Sciatic nerve (tissue), 2 donors: ENCODE measurements at regions of chr22 and their contacts with region 1.

Region 1: DNA sequence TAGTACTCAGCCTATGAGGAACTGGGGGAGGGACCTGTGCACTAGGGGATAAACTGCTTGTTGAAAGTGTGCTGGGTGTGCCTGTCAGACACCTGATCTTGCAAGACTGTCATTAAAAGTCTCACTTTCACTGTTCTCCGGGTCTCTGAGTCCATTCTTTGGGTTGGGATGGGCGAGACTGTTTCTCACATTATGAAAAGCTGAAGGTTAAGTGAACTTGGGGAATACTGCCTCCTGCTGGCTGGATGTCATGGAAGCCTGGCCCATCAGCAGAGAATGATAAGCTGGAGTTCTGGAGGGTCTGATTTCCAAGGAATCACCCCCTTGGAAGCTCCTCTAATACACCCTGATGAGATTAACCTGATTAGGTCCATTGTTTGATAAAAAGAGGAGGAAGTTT is 9.0 kb upstream of the VPREB1 start:
- DNase-seq: no peak
- ATAC-seq: no peak

Region 2: GRCh38 chr22:22207845-22208564 is 27.6 kb before region 1 on chr22:
- intact Hi-C with region 1: no loop called
- DNase-seq: peak; percentile 82
- ATAC-seq: peak; percentile 69

Region 3: GRCh38 chr22:22609291-22609690 is 373.7 kb after region 1 on chr22:
- intact Hi-C with region 1: loop called (anchors 5 kb)
- DNase-seq: no peak
- ATAC-seq: no peak